Heart left ventricle (tissue), 16 donors: ENCODE measurements at regions of chr12 and their contacts with region 1.

Region 1: GRCh38 chr12:93668919-93669418 is 8.2 kb upstream of the CRADD start:
- DNase-seq: no peak
- ATAC-seq: no peak
- H3K4me3 ChIP-seq: no peak overlapping the region
- H3K27ac ChIP-seq: no peak overlapping the region
- H3K4me1 ChIP-seq: peaks cover 0 to 4% (median 0%) of the 10 kb centered on the region in 12 donors
- H3K27me3 ChIP-seq: no peaks in the 10 kb centered on the region
- CTCF ChIP-seq: no peak
- POLR2A ChIP-seq: no peak

Region 2: DNA sequence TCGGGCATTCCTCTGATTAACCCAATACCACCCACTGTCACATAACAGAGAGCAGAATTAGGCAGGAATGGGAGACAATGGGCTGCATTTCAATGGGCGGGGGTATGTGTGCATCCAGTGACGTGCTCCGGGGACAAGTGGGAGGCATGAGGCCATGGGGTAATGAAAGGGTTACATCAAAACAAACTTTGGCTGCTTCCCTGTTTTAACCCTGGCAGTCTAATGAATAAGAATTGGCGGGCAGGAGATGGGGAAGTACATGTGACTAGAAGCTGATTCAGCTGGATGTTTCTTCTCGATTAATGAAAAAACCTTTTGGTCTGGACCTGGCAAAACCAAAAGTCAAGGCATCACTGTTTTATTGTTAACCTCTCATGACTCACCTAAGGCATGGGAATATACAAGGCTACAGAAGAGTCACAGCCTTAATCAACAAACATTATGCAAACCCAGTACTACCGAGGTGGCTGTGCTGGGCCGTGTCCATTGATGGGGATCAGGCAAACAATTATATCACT is 52.3 kb before region 1 on chr12:
- intact Hi-C with region 1: loop called in 4 of 10 experiments (anchors 1 to 5 kb)
- DNase-seq: no peak
- ATAC-seq: no peak
- H3K4me3 ChIP-seq: no peak overlapping the region
- H3K27ac ChIP-seq: no peak overlapping the region
- H3K4me1 ChIP-seq: peaks cover 0 to 15% (median 0%) of the 10 kb centered on the region in 12 donors
- H3K27me3 ChIP-seq: no peaks in the 10 kb centered on the region
- CTCF ChIP-seq: no peak
- POLR2A ChIP-seq: no peak

Region 3: GRCh38 chr12:93624595-93625294 is 44.2 kb before region 1 on chr12:
- intact Hi-C with region 1: loop called in 5 of 10 experiments (anchors 5 kb)
- DNase-seq: no peak
- ATAC-seq: peak in 1 of 4 donors; percentile 58
- H3K4me3 ChIP-seq: no peak overlapping the region
- H3K27ac ChIP-seq: peak overlapping the region in 1 of 12 donors; percentile 38
- H3K4me1 ChIP-seq: peaks cover 0 to 9% (median 0%) of the 10 kb centered on the region in 12 donors
- H3K27me3 ChIP-seq: no peaks in the 10 kb centered on the region
- CTCF ChIP-seq: no peak
- POLR2A ChIP-seq: no peak